ENCODE measurements at regions of chr16 and their contacts with region 1.

Region 1: DNA sequence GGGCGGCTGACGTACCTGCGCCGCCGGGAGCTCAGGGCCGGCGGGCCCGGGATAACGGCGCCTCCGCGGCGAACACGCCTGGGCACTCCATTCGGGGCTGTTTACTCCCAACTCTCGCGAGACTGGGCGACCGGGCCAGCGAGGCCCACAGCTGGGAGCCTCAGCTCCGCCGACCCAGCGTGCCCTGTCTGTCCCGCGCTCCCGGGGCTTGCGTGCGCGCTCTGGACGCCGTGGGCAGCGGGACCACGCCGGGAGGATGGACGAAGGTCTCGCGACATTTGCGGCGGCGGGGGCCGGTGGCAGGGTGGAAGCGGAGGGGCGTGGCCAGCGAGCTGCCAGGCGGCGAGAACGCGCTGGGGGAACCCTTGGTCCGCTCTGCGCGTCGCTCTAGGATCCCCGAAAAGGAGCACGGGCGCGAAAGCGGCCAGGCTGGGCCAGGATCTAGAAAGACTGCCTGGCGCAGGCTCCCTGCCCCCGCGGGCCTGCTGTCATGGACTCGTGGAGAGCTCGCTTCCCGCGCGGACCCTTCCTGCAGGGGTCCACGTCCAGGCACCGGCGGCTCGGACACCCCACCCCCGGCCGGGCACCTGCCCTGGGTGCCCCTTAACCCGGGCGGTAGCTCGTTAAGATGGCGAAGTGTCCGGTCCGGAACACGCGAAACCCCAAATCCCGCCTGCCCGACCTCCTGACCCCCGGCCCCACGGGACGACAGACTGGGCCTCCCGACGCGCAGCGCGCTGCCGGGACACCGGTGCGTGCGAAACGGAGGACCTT is at the start of gene MBTPS1:
- DNase-seq: peak; percentile 98
- H3K4me3 ChIP-seq: peak within 1 kb of the TSS; percentile 86
- H3K4me3 Mint-ChIP-seq: peak within 1 kb of the TSS; percentile 92 to 95 (median 93)
- H3K27ac ChIP-seq: peak within 1 kb of the TSS; percentile 87
- H3K27ac Mint-ChIP-seq: peak within 1 kb of the TSS; percentile 95 to 100 (median 98)
- H3K4me1 ChIP-seq: peaks cover 23% of the 10 kb centered on the region
- H3K4me1 Mint-ChIP-seq: peaks cover 19 to 42% (median 33%) of the 10 kb centered on the region in 3 donors
- H3K27me3 ChIP-seq: no peaks in the 10 kb centered on the region
- H3K27me3 Mint-ChIP-seq: peaks cover 0 to 1% of the 10 kb centered on the region in 2 donors
- total RNA-seq, gene MBTPS1: 38.3 to 45.0 TPM

Region 2: DNA sequence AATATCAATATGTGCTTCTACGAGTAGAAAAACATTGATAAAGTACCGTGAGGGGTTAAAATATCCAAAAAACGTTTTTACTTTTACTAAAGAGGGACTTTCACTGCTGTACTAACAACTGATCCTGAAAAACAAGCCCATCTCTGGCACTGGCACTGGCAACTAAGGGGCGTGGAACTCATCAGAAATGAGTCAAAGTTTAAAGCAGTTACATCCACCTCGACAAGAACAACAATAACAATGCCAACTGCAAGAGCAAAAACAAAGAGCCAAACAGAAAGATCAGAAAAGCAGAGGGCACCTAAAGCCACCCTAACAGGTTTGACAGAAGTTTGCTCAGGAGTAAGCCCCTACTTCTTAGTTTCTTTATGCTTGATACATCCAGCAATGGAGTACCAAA is 13.2 kb before region 1 on chr16:
- CTCF ChIA-PET with region 1: interaction called, 11 read pairs
- POLR2A ChIA-PET with region 1: interaction called, 3 read pairs
- DNase-seq: no peak
- H3K4me3 ChIP-seq: no peak overlapping the region
- H3K4me3 Mint-ChIP-seq: no peak overlapping the region
- H3K27ac ChIP-seq: no peak overlapping the region
- H3K27ac Mint-ChIP-seq: peak overlapping the region in 4 of 8 donors; percentile 12 to 65 (median 22)
- H3K4me1 ChIP-seq: peaks cover 9% of the 10 kb centered on the region
- H3K4me1 Mint-ChIP-seq: peaks cover 45 to 78% (median 72%) of the 10 kb centered on the region in 3 donors
- H3K27me3 ChIP-seq: no peaks in the 10 kb centered on the region
- H3K27me3 Mint-ChIP-seq: no peaks in the 10 kb centered on the region

Region 3: DNA sequence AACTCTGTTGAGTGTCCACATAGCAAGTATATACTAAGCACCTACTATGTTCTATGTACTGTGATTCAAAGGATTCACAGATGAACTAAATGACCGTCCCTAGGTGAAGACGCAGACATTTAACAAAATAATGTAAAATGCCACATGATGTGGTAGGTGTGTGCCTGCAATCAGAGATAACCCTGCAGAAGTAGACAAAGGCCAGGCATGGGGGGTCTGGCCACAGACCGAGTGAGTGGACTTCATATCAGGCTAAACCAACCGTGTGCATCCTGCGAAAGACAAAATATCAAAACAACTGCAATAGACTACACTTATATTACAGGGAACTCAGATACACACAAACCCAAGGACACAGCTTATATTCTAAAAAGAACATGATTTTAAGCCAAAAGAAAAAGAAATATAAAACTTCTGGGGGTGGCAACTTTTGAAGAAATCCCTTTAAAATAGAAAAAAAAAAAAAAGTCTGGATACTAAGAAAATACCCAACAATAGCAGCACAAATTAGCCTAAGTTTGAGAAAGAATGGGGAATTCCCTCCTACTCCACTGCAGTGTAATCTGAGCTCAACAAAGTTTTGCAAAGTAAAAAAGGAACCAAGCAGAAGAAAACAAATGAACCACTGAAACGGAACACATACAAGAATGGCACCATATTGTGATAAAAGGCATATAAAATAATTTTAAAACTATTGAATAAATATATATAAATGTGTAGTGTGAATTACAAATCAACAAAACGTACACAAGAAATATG is 15.8 kb after region 1 on chr16:
- CTCF ChIA-PET with region 1: interaction called, 12 read pairs
- POLR2A ChIA-PET with region 1: no interaction called
- DNase-seq: no peak
- H3K4me3 ChIP-seq: no peak overlapping the region
- H3K4me3 Mint-ChIP-seq: no peak overlapping the region
- H3K27ac ChIP-seq: no peak overlapping the region
- H3K27ac Mint-ChIP-seq: no peak overlapping the region
- H3K4me1 ChIP-seq: peaks cover 3% of the 10 kb centered on the region
- H3K4me1 Mint-ChIP-seq: peaks cover 2 to 14% (median 5%) of the 10 kb centered on the region in 3 donors
- H3K27me3 ChIP-seq: no peaks in the 10 kb centered on the region
- H3K27me3 Mint-ChIP-seq: peaks cover 0 to 1% of the 10 kb centered on the region in 2 donors

Region 4: GRCh38 chr16:84138824-84139627 is 22.1 kb after region 1 on chr16:
- CTCF ChIA-PET with region 1: interaction called, 12 read pairs
- POLR2A ChIA-PET with region 1: interaction called, 24 read pairs
- DNase-seq: peak in 2 of 5 donors; percentile 10 to 15
- H3K4me3 ChIP-seq: no peak overlapping the region
- H3K4me3 Mint-ChIP-seq: peak overlapping the region in 3 of 7 donors; percentile 7 to 35 (median 30)
- H3K27ac ChIP-seq: peak overlapping the region; percentile 69
- H3K27ac Mint-ChIP-seq: peak overlapping the region in 5 of 8 donors; percentile 11 to 91 (median 38)
- H3K4me1 ChIP-seq: peaks cover 17% of the 10 kb centered on the region
- H3K4me1 Mint-ChIP-seq: peaks cover 25 to 47% (median 43%) of the 10 kb centered on the region in 3 donors
- H3K27me3 ChIP-seq: no peaks in the 10 kb centered on the region
- H3K27me3 Mint-ChIP-seq: no peaks in the 10 kb centered on the region

Region 5: GRCh38 chr16:84144859-84145639 is 28.1 kb after region 1 on chr16 and contains the starts of genes DNAAF1 and HSDL1:
- CTCF ChIA-PET with region 1: interaction called, 6 read pairs
- POLR2A ChIA-PET with region 1: interaction called, 24 read pairs
- DNase-seq: peak; percentile 91 to 95 (median 95)
- H3K4me3 ChIP-seq: peak within 1 kb of the TSS; percentile 77
- H3K4me3 Mint-ChIP-seq: peak within 1 kb of the TSS; percentile 90 to 98 (median 95)
- H3K27ac ChIP-seq: peak within 1 kb of the TSS; percentile 70
- H3K27ac Mint-ChIP-seq: peak within 1 kb of the TSS; percentile 84 to 97 (median 90)
- H3K4me1 ChIP-seq: peaks cover 15% of the 10 kb centered on the region
- H3K4me1 Mint-ChIP-seq: peaks cover 15 to 29% (median 21%) of the 10 kb centered on the region in 3 donors
- H3K27me3 ChIP-seq: peaks cover 5% of the 10 kb centered on the region
- H3K27me3 Mint-ChIP-seq: peaks cover 0 to 13% of the 10 kb centered on the region in 2 donors
- total RNA-seq, gene DNAAF1: 0.31 TPM in 1 of 2 experiments, not detected in the other
- total RNA-seq, gene HSDL1: 13.5 to 15.2 TPM

Region 6: DNA sequence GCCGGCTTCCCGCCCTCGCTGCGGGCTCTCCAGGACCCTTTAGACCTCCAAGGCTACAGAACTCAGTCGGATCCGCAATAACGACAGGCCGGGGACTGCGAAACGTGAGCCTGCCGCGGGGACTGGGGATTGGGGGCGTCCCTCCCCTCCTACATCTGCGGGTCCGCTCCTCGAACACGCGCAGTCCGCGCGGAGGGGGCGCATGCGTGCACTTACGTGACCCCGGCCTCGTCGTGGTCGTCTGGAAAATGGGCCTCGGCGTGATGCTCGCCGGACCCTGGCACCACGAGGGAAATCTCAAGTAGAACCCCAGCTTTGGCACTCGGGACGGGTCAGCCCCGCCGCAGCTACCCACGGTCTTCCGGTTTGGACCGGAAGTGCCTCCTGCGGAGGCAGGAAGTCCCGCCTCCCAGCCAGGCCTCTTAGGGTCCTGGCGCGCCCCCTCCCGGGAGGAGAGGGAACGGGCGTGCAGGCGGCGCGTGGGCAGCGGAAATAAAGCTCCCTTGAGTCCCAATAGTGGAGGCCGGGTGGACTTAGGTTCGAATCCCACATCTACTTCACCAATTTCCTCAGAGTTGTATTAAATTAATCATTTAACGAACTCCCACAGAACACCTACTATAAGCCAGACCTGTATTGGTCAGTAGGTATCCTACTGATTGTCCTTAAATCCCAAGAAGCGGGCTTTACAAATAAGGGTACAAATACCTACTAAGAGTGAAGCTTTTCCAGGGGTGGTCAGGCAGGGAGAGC is 70.0 kb after region 1 on chr16 and contains the start of gene TAF1C:
- CTCF ChIA-PET with region 1: interaction called, 22 read pairs
- POLR2A ChIA-PET with region 1: interaction called, 13 read pairs
- DNase-seq: peak; percentile 83 to 92 (median 86)
- H3K4me3 ChIP-seq: peak within 1 kb of the TSS; percentile 99
- H3K4me3 Mint-ChIP-seq: peak within 1 kb of the TSS; percentile 90 to 99 (median 96)
- H3K27ac ChIP-seq: peak within 1 kb of the TSS; percentile 90
- H3K27ac Mint-ChIP-seq: peak within 1 kb of the TSS; percentile 86 to 97 (median 94)
- H3K4me1 ChIP-seq: peaks cover 14% of the 10 kb centered on the region
- H3K4me1 Mint-ChIP-seq: peaks cover 21 to 29% (median 23%) of the 10 kb centered on the region in 3 donors
- H3K27me3 ChIP-seq: no peaks in the 10 kb centered on the region
- H3K27me3 Mint-ChIP-seq: no peaks in the 10 kb centered on the region
- total RNA-seq, gene TAF1C: 49.9 to 51.2 TPM

Region 7: DNA sequence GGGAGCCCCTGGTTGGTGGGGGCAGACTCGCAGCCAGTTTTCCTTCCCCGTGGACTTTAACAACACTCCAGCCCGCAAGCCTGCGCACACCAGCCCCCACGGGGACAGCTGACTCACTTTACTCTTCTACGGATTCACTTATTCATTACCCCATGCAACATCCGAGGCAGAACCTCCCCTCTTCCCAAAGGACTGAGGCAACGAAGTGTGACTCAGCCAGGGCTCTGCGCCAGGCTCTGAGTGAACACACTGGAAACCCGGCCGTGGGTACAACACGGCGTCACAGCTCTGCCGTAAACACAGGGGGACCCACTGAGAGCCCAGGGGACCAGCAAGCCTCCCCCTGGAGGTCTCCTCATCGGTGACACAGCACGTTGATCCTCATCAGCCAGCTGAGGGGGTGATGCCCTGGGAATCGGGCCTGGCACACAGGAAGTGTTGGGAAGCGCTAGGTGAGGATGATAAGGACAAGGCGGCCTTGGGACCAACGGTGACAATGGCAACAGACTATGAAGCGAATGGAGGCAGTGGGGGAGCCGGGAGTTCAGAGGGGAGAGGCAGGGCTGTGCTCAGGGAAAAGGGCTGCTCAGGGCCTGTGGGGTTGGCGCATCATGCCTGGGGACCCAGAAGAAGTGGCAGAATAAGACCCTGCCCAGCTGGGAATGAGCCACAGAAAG is 486.4 kb after region 1 on chr16:
- CTCF ChIA-PET with region 1: no interaction called
- POLR2A ChIA-PET with region 1: no interaction called
- DNase-seq: peak in 1 of 5 donors; percentile 67
- H3K4me3 ChIP-seq: peak overlapping the region; percentile 2
- H3K4me3 Mint-ChIP-seq: peak overlapping the region; percentile 69 to 89 (median 76)
- H3K27ac ChIP-seq: peak overlapping the region; percentile 32
- H3K27ac Mint-ChIP-seq: peak overlapping the region; percentile 84 to 100 (median 95)
- H3K4me1 ChIP-seq: peaks cover 90% of the 10 kb centered on the region
- H3K4me1 Mint-ChIP-seq: peaks cover 79 to 96% (median 95%) of the 10 kb centered on the region in 3 donors
- H3K27me3 ChIP-seq: no peaks in the 10 kb centered on the region
- H3K27me3 Mint-ChIP-seq: peaks cover 0 to 2% of the 10 kb centered on the region in 2 donors

Measured in CD8-positive, alpha-beta memory T cell (primary cell).